CD4-positive, alpha-beta T cell (primary cell): ENCODE measurements at regions of chr12 and their contacts with region 1.

Region 1: DNA sequence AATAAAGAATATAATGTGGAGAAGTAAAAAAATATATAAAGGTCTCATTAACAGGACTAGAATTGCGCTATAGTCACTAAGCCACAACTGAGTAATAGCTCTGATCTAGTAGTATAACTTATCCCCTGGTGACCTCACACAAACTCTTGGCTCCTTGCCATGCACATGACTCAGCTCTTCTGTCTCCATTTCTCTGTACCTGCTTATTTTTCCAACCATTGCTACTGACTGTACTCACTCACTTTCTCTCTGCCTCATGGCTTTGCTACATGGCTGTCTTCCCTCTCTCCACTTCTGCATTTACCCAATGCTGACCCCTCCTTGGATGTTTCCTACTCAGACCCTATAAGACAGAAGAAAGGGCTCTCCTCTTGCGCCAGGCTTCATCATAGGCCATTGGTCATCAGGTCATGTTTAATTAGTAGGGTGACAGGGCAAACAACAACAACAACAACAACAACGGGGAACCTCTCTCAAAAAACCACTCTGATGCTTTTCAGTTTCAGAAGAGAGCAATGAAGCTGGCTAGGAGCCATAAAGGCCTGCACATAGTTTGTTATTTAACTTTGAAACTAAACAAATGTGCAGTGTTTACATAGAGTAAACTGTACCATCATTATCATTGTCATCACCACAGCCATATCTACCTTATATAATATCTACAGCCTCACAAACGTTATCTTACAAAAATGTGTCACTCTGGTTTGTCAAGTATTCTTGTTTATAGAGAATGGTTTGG is 25.6 kb upstream of the KRAS start:
- DNase-seq: peak in 11 of 14 experiments; percentile 0 to 61 (median 32)
- ATAC-seq: no peak
- H3K4me3 ChIP-seq: no peak overlapping the region
- H3K4me3 Mint-ChIP-seq: no peak overlapping the region
- H3K27ac ChIP-seq: no peak overlapping the region
- H3K27ac Mint-ChIP-seq: no peak overlapping the region
- H3K4me1 ChIP-seq: peaks cover 17% of the 10 kb centered on the region
- H3K4me1 Mint-ChIP-seq: peaks cover 27% of the 10 kb centered on the region
- H3K27me3 ChIP-seq: no peaks in the 10 kb centered on the region
- H3K27me3 Mint-ChIP-seq: no peaks in the 10 kb centered on the region
- CTCF ChIP-seq: no peak

Region 2: DNA sequence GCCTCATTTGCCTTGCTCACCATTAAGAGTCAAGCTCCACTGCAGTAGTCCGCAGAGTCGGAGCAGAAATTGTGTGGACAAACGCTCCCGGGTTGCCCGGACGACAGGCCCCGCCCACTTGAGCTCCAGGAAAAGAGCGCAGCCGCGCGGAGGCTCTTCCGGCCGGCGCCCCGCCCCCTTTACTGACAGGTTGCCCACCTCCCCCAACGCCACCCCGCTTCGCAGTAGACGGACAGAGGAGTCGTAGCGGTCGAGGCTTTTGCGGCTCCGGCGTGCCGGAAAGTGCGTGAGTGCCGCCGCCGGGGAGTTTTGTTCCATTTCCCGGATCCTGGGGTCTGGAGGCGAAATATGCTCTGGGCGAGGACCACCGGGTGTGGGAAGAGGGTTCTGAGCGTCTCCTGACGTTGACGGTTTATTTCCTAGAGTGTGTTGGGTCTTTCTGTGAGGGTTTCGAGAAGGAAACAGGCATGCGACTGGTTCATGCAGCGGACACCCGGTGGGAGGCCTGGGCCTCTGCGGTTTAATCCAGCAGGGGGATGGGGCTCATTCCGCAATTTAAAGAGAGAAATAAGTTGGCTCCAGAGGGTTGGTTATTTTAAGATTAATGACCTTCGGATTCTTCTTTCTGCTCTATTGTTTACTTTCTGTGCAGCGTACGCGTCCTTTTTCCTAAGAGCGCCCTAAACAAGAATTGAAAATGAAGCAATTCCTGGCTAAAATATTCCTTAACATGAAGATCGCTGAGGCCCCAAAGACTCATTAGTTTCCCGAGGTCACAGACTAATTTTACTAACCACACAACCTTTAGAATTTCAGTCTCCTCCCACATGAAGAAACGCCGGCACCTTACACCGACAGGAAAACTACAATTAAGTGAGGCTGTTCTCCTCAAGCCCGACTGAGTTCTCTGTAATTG is 81.1 kb before region 1 on chr12 and contains the starts of genes DNAI7 and ETFRF1:
- CTCF ChIA-PET with region 1: no interaction called
- POLR2A ChIA-PET with region 1: no interaction called
- intact Hi-C with region 1: no loop called
- DNase-seq: peak; percentile 89 to 98 (median 95)
- ATAC-seq: peak; percentile 94
- H3K4me3 ChIP-seq: peak within 1 kb of the TSS; percentile 90
- H3K4me3 Mint-ChIP-seq: peak within 1 kb of the TSS; percentile 98
- H3K27ac ChIP-seq: peak within 1 kb of the TSS; percentile 92 to 96
- H3K27ac Mint-ChIP-seq: peak within 1 kb of the TSS; percentile 98
- H3K4me1 ChIP-seq: peaks cover 14% of the 10 kb centered on the region
- H3K4me1 Mint-ChIP-seq: peaks cover 51% of the 10 kb centered on the region
- H3K27me3 ChIP-seq: no peaks in the 10 kb centered on the region
- H3K27me3 Mint-ChIP-seq: no peaks in the 10 kb centered on the region
- CTCF ChIP-seq: no peak
- total RNA-seq, gene DNAI7: 0.36 TPM in 1 of 2 experiments, not detected in the other
- total RNA-seq, gene ETFRF1: 32.9 to 39.8 TPM

Region 3: DNA sequence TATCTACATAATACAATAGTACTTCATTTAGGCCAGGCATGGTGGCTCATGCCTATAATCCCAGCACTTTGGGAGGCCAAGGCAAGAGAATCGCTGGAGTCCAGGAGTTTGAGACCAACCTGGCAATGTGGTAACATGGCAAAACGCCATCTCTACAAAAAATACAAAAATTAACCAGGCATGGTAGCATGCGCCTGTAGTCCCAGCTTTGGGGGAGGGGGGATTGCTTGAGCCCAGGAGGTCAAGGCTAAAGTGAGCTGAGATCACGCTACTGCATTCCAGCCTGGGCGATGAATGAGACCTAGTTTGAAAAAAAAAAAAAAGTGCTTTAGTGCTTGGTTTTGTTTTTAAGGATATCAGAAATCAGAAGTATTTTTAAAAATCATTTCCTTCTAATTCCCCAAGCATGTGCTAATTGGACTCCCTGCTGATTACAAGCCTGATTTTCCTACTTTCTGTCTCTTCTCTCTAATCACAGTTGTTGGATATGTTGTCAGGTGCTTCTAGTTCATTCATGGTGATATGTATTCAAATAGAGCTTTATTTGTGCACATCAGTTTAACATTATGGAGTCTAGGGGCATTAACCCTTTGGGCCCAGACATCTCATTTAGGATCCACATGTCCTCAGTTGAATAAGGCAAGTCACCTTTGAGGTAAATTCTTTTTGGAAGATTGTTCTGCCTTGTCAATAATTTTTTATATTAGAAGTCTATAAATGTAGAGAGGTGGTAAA is 18.6 kb before region 1 on chr12:
- CTCF ChIA-PET with region 1: no interaction called
- POLR2A ChIA-PET with region 1: no interaction called
- intact Hi-C with region 1: loop called in 1 of 2 experiments (anchors 2 kb)
- DNase-seq: no peak
- ATAC-seq: no peak
- H3K4me3 ChIP-seq: no peak overlapping the region
- H3K4me3 Mint-ChIP-seq: no peak overlapping the region
- H3K27ac ChIP-seq: no peak overlapping the region
- H3K27ac Mint-ChIP-seq: no peak overlapping the region
- H3K4me1 ChIP-seq: no peaks in the 10 kb centered on the region
- H3K4me1 Mint-ChIP-seq: peaks cover 9% of the 10 kb centered on the region
- H3K27me3 ChIP-seq: no peaks in the 10 kb centered on the region
- H3K27me3 Mint-ChIP-seq: no peaks in the 10 kb centered on the region
- CTCF ChIP-seq: no peak

Region 4: DNA sequence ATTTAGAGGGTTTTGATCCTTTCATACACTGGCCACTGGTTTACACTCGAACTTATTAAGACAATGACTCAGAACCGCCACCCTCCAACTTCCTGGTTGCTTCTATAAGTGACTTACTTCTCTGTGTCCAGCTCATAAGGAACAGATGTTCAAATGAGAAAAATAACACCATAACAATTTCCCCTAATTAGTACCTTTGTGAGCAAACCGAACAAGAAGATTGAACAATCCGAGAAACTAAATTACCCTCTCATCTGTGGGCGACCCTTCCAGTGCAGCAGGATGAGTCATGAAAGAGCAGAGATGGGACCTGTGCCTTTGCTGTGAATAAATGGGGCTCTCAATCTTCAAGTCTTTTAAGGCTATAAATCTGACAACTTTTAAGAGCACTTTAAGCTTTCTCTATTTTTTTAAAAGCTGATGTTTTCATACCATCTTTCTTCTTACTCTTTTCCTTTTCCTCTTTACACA is 535.3 kb after region 1 on chr12:
- CTCF ChIA-PET with region 1: no interaction called
- POLR2A ChIA-PET with region 1: no interaction called
- intact Hi-C with region 1: no loop called
- DNase-seq: no peak
- ATAC-seq: no peak
- H3K4me3 ChIP-seq: no peak overlapping the region
- H3K4me3 Mint-ChIP-seq: no peak overlapping the region
- H3K27ac ChIP-seq: no peak overlapping the region
- H3K27ac Mint-ChIP-seq: no peak overlapping the region
- H3K4me1 ChIP-seq: no peaks in the 10 kb centered on the region
- H3K4me1 Mint-ChIP-seq: peaks cover 4% of the 10 kb centered on the region
- H3K27me3 ChIP-seq: no peaks in the 10 kb centered on the region
- H3K27me3 Mint-ChIP-seq: no peaks in the 10 kb centered on the region
- CTCF ChIP-seq: no peak